Natural killer cell (primary cell): ENCODE measurements at regions of chr7 and their contacts with region 1.

Region 1: GRCh38 chr7:73451780-73452398 is 18.3 kb downstream of the FZD9 start:
- DNase-seq: peak in 1 of 2 donors; percentile 82
- ATAC-seq: peak; percentile 87 to 97 (median 90)
- H3K4me3 ChIP-seq: no peak overlapping the region
- H3K4me3 Mint-ChIP-seq: no peak overlapping the region
- H3K27ac ChIP-seq: no peak overlapping the region
- H3K27ac Mint-ChIP-seq: no peak overlapping the region
- H3K4me1 ChIP-seq: no peaks in the 10 kb centered on the region
- H3K4me1 Mint-ChIP-seq: peaks cover 8 to 11% of the 10 kb centered on the region in 2 donors
- H3K27me3 ChIP-seq: no peaks in the 10 kb centered on the region
- H3K27me3 Mint-ChIP-seq: no peaks in the 10 kb centered on the region
- CTCF ChIP-seq: peak; percentile 99

Region 2: DNA sequence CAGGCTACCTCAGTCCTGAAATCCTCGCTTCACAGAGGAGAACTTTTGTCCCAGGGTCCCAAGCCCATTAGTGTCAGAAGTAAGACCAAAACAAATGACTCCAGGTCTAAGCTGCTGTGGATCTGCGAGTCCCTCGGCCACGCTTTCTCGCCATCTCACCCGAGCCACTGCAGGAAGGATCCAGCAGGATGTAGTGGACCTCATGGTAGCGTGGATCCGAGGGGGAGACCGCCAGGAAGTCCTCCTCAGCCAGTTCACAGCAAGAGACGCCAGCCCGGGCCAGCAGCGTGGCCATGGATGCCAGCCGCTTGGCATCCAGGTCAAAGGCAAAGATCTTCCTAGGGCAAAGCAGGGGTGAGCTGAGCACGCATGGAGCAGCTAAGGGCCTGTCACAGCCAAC is 147.8 kb before region 1 on chr7:
- intact Hi-C with region 1: no loop called
- DNase-seq: no peak
- ATAC-seq: no peak
- H3K4me3 ChIP-seq: no peak overlapping the region
- H3K4me3 Mint-ChIP-seq: no peak overlapping the region
- H3K27ac ChIP-seq: no peak overlapping the region
- H3K27ac Mint-ChIP-seq: no peak overlapping the region
- H3K4me1 ChIP-seq: peaks cover 14% of the 10 kb centered on the region
- H3K4me1 Mint-ChIP-seq: peaks cover 25 to 33% of the 10 kb centered on the region in 2 donors
- H3K27me3 ChIP-seq: no peaks in the 10 kb centered on the region
- H3K27me3 Mint-ChIP-seq: no peaks in the 10 kb centered on the region
- CTCF ChIP-seq: no peak

Region 3: DNA sequence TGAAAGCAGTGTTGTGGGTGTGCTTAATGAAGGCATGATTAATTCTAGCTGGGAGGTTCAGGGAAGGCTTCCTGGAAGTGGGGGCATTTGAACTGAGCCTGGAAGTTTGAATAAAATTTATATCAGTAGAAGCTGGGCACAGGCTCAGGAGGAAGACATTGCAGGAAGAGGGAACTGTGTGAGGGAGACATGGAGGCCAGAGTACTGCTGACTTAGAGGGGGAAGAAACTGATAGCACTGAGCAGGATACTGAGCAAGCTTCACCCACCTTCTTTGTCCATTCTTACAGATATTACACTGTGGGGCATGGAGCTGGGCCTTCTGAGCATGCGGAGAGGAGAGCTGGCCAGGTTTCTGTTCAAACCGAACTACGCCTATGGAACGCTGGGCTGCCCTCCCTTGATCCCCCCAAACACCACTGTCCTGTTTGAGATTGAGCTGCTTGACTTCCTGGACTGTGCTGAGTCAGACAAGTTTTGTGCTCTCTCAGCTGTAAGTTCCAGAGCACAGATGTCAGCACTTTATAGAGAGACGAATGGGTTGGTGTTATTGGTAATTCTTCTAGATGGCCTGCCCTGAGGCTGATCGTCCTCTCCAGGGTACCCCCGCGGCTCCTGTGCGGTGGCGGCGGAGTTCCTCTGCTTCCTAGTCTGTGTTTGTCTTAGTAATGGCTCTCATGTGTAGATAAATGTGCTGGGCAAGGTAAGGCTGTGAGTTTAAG is 121.9 kb before region 1 on chr7:
- intact Hi-C with region 1: loop called (anchors 2 kb)
- DNase-seq: no peak
- ATAC-seq: no peak
- H3K4me3 ChIP-seq: no peak overlapping the region
- H3K4me3 Mint-ChIP-seq: no peak overlapping the region
- H3K27ac ChIP-seq: no peak overlapping the region
- H3K27ac Mint-ChIP-seq: no peak overlapping the region
- H3K4me1 ChIP-seq: no peaks in the 10 kb centered on the region
- H3K4me1 Mint-ChIP-seq: peaks cover 0 to 8% of the 10 kb centered on the region in 2 donors
- H3K27me3 ChIP-seq: no peaks in the 10 kb centered on the region
- H3K27me3 Mint-ChIP-seq: peaks cover 0 to 7% of the 10 kb centered on the region in 2 donors
- CTCF ChIP-seq: no peak

Region 4: DNA sequence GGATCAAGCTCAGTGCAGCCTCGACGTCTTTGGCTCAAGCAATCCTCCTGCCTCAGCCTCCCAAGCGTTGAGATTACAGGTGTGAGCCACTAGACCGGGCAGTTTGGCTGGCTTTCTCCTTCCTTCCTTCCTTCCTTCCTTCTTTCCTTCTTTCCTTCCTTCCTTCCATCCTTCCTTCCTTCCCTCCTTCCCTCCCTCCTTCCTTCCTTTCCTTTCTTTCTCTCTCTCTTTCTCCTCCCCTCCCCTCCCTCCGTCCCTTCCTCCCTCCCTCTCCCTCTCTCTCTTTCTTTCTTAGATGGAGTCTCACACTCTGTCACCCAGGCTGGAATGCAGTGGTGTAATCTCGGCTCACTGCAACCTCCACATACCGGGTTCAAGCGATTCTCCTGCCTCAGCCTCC is 208.1 kb after region 1 on chr7:
- intact Hi-C with region 1: no loop called
- DNase-seq: no peak
- ATAC-seq: no peak
- H3K4me3 ChIP-seq: no peak overlapping the region
- H3K4me3 Mint-ChIP-seq: no peak overlapping the region
- H3K27ac ChIP-seq: no peak overlapping the region
- H3K27ac Mint-ChIP-seq: no peak overlapping the region
- H3K4me1 ChIP-seq: no peaks in the 10 kb centered on the region
- H3K4me1 Mint-ChIP-seq: no peaks in the 10 kb centered on the region
- H3K27me3 ChIP-seq: peaks cover 8% of the 10 kb centered on the region
- H3K27me3 Mint-ChIP-seq: peaks cover 23 to 35% of the 10 kb centered on the region in 2 donors
- CTCF ChIP-seq: no peak